HAP-1 (cell line): ENCODE measurements at regions of chr3 and their contacts with region 1.

Region 1: DNA sequence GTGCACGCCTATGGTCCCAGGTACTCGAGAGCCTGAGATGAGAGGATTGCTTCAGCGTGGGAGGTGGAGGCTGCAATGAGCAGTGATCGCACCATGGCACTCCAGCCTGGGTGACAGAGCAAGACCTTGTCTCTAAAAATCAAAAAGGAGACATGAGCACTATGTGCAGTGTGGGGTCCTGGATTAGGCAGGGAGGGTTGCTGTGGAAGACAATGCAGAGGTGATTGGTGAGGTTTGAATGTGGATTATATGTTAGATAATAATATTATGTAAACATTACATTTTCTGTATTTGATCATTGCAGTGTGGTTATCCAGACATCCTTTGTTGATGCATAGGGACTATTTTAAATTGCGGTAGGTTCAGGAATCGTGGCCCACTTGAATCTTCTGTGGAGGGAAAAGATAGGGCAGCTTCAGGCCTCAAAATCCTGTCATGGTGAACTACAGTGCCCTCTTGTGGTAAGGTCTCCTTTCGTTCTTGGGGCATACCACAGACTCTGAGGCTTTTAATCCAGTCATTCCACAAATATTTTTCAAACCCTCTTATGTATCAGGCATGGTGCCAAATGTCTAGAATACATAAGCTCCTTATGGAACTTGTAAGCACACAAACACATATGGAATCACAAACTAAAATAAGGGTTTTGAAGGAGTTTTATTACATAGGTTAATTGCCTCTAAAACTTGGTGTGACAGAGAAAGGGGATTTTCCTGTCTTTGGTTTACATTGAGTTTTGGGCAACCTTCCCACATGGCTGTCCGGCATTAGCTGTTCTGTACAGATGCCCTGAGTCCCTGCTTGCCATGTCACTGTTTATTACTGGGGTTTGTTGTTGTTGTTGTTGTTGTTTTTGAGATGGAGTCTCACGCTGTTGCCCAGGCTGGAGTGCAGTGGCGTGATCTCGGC is 37.7 kb downstream of the GPD1L start:
- DNase-seq: peak; percentile 77 to 78
- H3K4me3 ChIP-seq: no peak overlapping the region
- H3K4me1 ChIP-seq: 0 out of 2 replicates have a peak, but pooled peaks cover 2% of the 10 kb centered on the region
- H3K27me3 ChIP-seq: no peaks in the 10 kb centered on the region

Region 2: GRCh38 chr3:31610700-31611275 is 533.3 kb before region 1 on chr3:
- in situ Hi-C with region 1: loop called (anchors 25 kb)
- DNase-seq: peak; percentile 47 to 54
- H3K4me3 ChIP-seq: no peak overlapping the region
- H3K4me1 ChIP-seq: peaks cover 30% of the 10 kb centered on the region
- H3K27me3 ChIP-seq: no peaks in the 10 kb centered on the region